A549 (cell line): ENCODE measurements at regions of chr11 and their contacts with region 1.

Region 1: DNA sequence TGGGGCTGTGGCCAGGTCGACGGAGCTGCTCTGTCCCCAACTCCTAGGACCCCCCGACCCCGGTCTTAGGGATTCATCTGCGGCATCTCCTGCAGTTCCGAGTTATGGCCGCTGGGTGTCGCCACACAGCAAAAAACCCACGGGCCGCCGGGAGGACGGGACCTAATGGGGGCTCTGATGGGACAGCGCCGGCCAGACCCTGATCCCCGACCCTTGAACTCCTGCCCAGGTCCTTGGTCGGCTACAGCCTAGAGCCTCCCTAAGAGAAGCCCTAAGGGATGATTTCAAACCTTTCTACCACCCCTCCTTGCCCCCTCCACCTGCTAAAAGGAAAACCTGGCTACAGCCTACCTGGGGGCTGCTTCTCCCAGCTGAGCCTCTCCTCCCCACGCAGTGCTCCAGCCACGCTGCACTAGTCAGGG is 30.8 kb upstream of the LRRC10B start:
- DNase-seq: peak; percentile 37 to 63
- ATAC-seq: peak; percentile 16 to 71; a peak in 3 of 6 replicates
- H3K4me3 ChIP-seq: no peak overlapping the region
- H3K27ac ChIP-seq: no peak overlapping the region
- H3K4me1 ChIP-seq: no peaks in the 10 kb centered on the region
- CTCF ChIP-seq: peak; percentile 88
- EP300 ChIP-seq: no peak
- POLR2A ChIP-seq: no peak
- RAD21 ChIP-seq: peak; percentile 89 to 90

Region 2: DNA sequence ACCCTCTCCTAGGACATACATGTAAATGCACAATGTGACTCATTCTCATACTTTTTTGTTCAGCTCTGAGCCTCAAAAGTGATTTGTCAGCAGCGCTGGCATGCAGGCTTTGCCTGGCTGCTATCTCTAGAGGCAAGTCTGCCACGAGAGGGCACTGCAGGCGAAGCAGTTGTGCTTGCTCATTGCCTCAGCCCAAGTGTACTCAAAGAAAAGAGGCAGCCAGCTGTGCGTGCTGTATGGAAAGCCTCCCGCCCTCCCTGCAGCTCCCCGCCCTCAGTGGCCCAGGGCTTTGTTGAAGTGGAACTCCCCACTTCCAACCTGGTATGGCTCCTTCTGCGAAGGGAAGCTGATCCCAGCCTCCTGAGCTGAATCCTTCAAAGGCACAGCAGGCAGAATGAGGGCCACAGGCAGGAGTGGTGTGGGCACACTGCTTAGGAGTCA is 31.5 kb before region 1 on chr11:
- CTCF ChIA-PET with region 1: interaction called, 59 read pairs
- POLR2A ChIA-PET with region 1: interaction called, 3 read pairs
- DNase-seq: peak; percentile 90
- ATAC-seq: peak; percentile 98 to 99
- H3K4me3 ChIP-seq: no peak overlapping the region
- H3K27ac ChIP-seq: peak overlapping the region; percentile 44 to 79; a peak in 5 of 6 replicates
- H3K4me1 ChIP-seq: peaks cover 12% of the 10 kb centered on the region
- CTCF ChIP-seq: peak; percentile 91
- EP300 ChIP-seq: no peak
- POLR2A ChIP-seq: no peak
- RAD21 ChIP-seq: peak; percentile 71 to 77

Region 3: GRCh38 chr11:61460474-61460881 is 17.3 kb before region 1 on chr11:
- CTCF ChIA-PET with region 1: interaction called, 15 read pairs
- POLR2A ChIA-PET with region 1: no interaction called
- DNase-seq: no peak
- ATAC-seq: no peak
- H3K4me3 ChIP-seq: no peak overlapping the region
- H3K27ac ChIP-seq: no peak overlapping the region
- H3K4me1 ChIP-seq: no peaks in the 10 kb centered on the region
- CTCF ChIP-seq: no peak
- EP300 ChIP-seq: no peak
- POLR2A ChIP-seq: no peak
- RAD21 ChIP-seq: no peak

Region 4: GRCh38 chr11:61503212-61503770 is 25.6 kb after region 1 on chr11:
- CTCF ChIA-PET with region 1: interaction called, 97 read pairs
- POLR2A ChIA-PET with region 1: no interaction called
- DNase-seq: no peak
- ATAC-seq: no peak
- H3K4me3 ChIP-seq: no peak overlapping the region
- H3K27ac ChIP-seq: no peak overlapping the region
- H3K4me1 ChIP-seq: peaks cover 2% of the 10 kb centered on the region; the same call in 2 of the 3 replicates
- CTCF ChIP-seq: no peak
- EP300 ChIP-seq: no peak
- POLR2A ChIP-seq: no peak
- RAD21 ChIP-seq: no peak

Region 5: DNA sequence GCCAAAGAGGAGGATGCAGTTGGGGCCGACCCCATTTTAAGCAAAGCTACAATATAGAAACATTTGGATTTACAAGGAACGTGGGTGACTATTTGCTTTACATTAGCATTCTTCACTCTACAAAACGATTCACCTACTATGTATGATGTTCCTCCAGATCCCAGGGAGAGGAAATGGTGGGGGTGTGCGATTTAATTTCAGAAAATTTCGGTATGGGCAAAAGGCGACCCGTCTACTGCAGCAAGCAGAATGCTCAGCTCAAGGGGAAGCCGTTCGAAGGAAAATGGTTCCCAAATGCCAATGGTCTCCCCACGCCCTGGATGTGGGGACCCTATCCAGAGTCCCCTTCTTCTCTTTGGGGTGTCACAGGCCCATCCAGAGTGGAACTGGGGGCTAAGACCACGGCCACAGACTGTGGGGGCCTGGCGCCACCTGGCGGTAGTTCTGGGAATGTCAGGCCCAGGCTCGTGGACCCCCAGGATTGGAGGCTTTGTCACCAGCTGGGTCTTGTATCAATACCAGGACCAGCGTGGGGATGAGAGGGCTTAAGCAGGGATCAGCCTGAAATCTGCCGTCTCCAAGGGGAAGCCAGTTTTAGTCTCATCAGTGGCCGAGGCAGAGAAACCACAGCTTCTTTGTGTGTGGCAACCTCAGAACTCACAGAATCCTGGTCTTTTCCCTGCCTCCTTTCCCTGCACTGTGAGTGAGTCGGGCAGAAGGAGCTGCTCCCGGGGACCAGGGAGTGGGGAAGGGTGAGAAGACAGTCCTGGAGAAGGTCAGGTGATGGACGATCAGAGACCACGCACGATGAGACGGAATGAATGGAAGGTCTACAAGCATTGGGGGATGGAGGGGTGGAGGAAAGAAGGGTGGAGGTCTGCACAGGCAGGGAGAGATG is 39.2 kb after region 1 on chr11:
- CTCF ChIA-PET with region 1: interaction called, 131 read pairs
- POLR2A ChIA-PET with region 1: interaction called, 3 read pairs
- DNase-seq: peak; percentile 28 to 86
- ATAC-seq: peak in 1 of 2 experiments; percentile 81; a peak in 3 of 6 replicates
- H3K4me3 ChIP-seq: no peak overlapping the region
- H3K27ac ChIP-seq: no peak overlapping the region
- H3K4me1 ChIP-seq: peaks cover 6% of the 10 kb centered on the region; the same call in 1 of the 3 replicates
- CTCF ChIP-seq: peak; percentile 93
- EP300 ChIP-seq: no peak
- POLR2A ChIP-seq: no peak
- RAD21 ChIP-seq: peak; percentile 83 to 86

Region 6: GRCh38 chr11:61532139-61533038 is 54.7 kb after region 1 on chr11:
- CTCF ChIA-PET with region 1: interaction called, 29 read pairs
- POLR2A ChIA-PET with region 1: no interaction called
- DNase-seq: peak; percentile 49 to 87
- ATAC-seq: peak; percentile 42 to 83; a peak in 5 of 6 replicates
- H3K4me3 ChIP-seq: no peak overlapping the region
- H3K27ac ChIP-seq: peak overlapping the region in 1 of 2 experiments; percentile 56; a peak in 2 of 6 replicates
- H3K4me1 ChIP-seq: peaks cover 9% of the 10 kb centered on the region
- CTCF ChIP-seq: peak; percentile 78
- EP300 ChIP-seq: no peak
- POLR2A ChIP-seq: no peak
- RAD21 ChIP-seq: peak; percentile 38 to 44; a peak in 3 of 5 replicates

Region 7: DNA sequence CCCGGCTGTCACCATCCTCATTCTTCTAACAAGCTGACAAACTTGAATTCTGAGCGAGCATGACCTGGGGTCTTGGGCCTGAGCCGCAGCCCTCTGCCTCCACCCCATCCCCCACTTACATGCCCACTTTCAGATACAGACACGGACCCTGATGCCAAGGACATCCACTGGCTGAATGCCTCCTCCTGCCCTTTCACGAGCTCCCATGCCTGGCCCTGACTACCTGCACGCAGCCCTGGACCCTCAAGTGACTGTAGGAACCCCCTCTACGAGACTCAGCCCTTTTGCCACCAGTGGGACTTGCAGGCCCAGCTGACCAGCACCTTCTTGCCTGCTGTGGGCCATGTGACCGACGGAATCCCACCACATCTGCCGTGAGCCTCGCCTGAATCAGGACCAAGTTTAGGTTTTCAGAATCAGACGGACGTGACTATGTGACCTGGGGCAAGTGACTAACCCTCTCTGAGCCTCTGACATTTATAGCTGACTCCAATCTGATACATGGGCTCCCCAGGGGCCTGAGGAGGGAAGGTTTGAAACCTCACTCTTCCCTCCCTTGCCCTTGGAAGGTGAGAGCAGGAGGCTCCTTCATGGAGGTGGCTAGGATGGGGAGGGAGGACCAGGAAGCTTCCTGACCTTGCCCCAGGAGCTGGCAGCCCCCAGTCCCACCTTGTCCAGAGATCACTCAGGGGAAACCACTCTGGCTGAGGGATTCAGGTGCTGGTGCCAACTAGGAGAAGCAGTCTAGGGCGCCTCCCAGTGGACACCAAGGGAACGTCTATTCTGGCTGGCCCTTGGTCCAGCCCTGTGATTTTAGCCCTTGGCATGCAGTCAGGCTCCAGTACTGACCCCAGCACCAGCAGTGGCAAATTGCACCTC is 150.1 kb after region 1 on chr11:
- CTCF ChIA-PET with region 1: interaction called, 141 read pairs
- POLR2A ChIA-PET with region 1: no interaction called
- DNase-seq: peak; percentile 65 to 67
- ATAC-seq: peak; percentile 81 to 95
- H3K4me3 ChIP-seq: no peak overlapping the region
- H3K27ac ChIP-seq: no peak overlapping the region
- H3K4me1 ChIP-seq: no peaks in the 10 kb centered on the region
- CTCF ChIP-seq: peak; percentile 75
- EP300 ChIP-seq: no peak
- POLR2A ChIP-seq: no peak
- RAD21 ChIP-seq: peak; percentile 68 to 72